Tibial artery (tissue), 4 donors: ENCODE measurements at regions of chr15 and their contacts with region 1.

Region 1: DNA sequence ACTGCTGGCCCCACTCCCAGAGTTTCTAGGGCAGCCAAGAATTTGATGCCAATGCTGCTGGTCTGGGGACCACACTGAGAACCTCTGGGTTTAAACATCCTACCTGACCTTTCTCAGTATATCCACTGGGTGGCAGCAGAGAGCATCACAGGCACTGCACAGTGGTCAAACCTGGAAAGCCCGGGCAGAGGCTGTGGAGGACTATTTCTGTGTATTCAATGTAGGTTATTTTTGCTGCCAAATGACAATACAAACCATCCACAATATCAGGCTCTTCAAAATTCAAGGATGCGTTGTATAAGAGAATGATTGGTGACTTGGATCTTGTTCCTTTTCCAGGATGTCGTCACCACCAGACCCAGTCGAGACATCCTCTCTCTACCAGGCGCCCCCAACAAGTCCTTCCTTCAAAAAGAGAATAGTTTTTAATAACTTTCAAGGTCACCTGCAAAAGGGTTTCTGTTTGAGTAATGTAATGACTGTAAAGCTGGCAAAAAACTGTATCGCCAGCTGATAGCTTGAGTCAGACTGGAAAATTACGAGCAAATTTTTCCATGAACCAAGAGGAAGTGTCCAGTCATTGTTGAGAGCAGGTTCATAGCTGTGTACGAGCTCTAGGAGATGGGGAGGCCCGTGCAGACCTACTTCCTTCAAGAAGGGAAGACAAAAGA is 30.5 kb upstream of the MYZAP start:
- DNase-seq: peak; percentile 73 to 78
- H3K4me3 ChIP-seq: no peak overlapping the region
- H3K27ac ChIP-seq: no peak overlapping the region
- H3K4me1 ChIP-seq: no peaks in the 10 kb centered on the region
- H3K27me3 ChIP-seq: no peaks in the 10 kb centered on the region
- CTCF ChIP-seq: peak; percentile 90 to 91

Region 2: DNA sequence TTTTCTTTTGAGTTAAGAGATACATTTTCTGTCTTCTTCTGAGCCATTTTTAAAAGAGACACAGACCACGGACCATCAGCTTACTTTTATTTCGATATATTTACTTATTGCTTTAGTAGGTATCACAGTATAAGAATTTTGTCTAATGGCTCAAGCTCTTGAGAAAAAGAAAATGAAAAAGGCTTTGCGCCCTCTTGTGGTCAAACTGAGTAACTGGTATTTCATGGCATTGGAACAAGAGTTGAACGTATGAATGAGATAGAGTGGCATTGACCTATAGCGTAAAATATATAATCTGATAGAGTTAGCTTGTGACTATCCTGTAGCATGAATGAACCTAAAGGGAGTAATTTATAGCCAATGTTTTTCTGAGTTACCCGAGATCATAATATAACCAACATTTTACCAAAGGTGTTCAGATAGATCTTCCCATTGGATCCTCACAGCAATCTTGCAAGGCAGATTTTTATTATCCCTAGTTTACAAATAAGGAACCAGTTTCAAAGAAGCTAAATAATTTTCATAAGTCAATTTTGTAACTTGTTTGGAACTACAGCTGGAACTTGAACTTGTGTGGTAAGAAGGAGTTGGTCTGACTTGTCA is 300.0 kb after region 1 on chr15:
- intact Hi-C with region 1: loop called (anchors 5 kb)
- DNase-seq: no peak
- H3K4me3 ChIP-seq: no peak overlapping the region
- H3K27ac ChIP-seq: no peak overlapping the region
- H3K4me1 ChIP-seq: no peaks in the 10 kb centered on the region
- H3K27me3 ChIP-seq: no peaks in the 10 kb centered on the region
- CTCF ChIP-seq: peak; percentile 77 to 84